ENCODE measurements at regions of chr15 and their contacts with region 1.

Region 1: GRCh38 chr15:74373731-74374647 is 6.5 kb upstream of the CYP11A1 start:
- DNase-seq: peak; percentile 94 to 98 (median 97)
- ATAC-seq: peak; percentile 98 to 99
- H3K4me3 ChIP-seq: peak overlapping the region; percentile 40
- H3K27ac ChIP-seq: no peak overlapping the region
- H3K4me1 ChIP-seq: no peaks in the 10 kb centered on the region
- H3K27me3 ChIP-seq: no peaks in the 10 kb centered on the region

Region 2: DNA sequence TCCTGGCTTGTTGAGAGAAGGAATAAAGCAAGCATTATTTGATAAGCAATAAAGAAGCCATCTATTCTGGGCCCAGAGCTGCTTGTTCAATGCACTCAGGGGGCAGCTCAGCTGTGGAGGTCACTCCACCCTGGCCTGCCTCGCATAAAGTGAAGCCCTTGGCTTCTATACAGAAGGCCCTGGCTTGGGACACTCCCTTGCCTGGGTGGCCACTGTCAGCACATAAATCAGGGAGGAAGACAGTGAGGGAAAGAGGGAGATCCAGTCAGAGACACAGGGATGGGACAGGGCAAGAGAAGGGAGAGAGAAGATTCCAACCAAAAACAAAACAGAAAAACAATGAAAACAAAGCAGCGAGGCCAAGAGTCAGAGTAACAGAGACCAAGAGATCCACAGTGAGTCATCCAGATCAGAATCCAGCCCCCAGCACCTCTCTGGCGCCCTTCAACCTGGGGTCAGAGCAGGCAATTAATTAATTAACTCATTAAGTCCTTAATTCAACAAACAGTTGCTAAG is 632.6 kb before region 1 on chr15:
- intact Hi-C with region 1: no loop called
- DNase-seq: peak in 1 of 3 donors; percentile 55
- ATAC-seq: no peak
- H3K4me3 ChIP-seq: no peak overlapping the region
- H3K27ac ChIP-seq: no peak overlapping the region
- H3K4me1 ChIP-seq: peaks cover 5% of the 10 kb centered on the region
- H3K27me3 ChIP-seq: no peaks in the 10 kb centered on the region

Region 3: GRCh38 chr15:74489518-74490338 is 115.7 kb after region 1 on chr15:
- intact Hi-C with region 1: loop called in 2 of 4 experiments (anchors 5 kb)
- DNase-seq: peak; percentile 20 to 72 (median 64)
- ATAC-seq: peak; percentile 47 to 66
- H3K4me3 ChIP-seq: no peak overlapping the region
- H3K27ac ChIP-seq: no peak overlapping the region
- H3K4me1 ChIP-seq: no peaks in the 10 kb centered on the region
- H3K27me3 ChIP-seq: no peaks in the 10 kb centered on the region

Region 4: DNA sequence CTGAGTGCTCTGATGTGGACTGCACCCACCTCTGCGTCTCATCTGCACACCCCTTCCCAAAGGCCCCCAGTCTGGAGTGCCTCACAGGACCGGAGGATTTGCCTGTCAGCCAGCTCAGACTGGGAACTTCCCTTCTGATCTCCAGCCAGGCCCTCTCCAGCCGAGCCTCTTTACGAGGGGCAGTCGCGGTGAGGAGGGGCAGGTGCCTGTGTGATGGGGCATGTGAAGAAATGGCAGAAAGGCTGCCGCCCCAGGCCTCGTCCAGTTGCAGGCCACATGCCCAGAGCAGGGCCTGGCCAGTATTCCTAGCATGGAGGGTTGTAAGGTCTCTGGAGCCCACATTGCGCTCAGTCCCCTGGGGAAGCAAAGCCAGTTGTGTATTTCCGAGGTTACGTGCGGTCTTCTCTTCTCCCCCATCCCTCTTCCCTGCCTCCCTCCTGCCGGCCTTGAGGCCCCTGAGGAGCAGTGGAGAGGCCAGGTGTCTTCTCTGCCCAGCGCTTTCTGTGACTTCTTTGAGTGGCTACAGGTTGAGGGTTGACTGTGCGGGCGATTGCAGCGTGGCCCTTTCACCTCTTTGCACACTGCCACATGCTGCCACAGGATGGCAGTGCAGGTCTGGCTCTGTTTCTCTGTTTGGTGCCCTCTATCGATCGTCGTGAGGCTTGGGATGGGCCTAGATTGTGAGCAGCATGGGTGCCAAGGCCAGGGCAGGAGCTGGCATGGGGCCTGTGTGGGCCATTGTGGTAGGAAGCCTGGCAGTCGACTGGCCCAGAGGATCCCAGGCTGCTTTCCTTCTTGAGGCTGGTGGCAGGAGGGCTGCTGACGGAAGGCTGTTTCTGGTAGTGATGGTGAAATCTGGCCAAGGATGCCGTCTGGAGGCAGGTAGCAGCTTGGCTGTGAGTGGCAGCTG is 246.9 kb after region 1 on chr15:
- intact Hi-C with region 1: loop called in 2 of 4 experiments (anchors 10 kb)
- DNase-seq: peak in 2 of 3 donors; percentile 59 to 82
- ATAC-seq: peak; percentile 28 to 31
- H3K4me3 ChIP-seq: no peak overlapping the region
- H3K27ac ChIP-seq: no peak overlapping the region
- H3K4me1 ChIP-seq: peaks cover 4% of the 10 kb centered on the region
- H3K27me3 ChIP-seq: no peaks in the 10 kb centered on the region

Region 5: GRCh38 chr15:74635228-74635627 is 261.2 kb after region 1 on chr15:
- intact Hi-C with region 1: loop called in 2 of 4 experiments (anchors 5 to 10 kb)
- DNase-seq: peak; percentile 55 to 79 (median 75)
- ATAC-seq: peak; percentile 58 to 72
- H3K4me3 ChIP-seq: no peak overlapping the region
- H3K27ac ChIP-seq: no peak overlapping the region
- H3K4me1 ChIP-seq: no peaks in the 10 kb centered on the region
- H3K27me3 ChIP-seq: no peaks in the 10 kb centered on the region

Region 6: DNA sequence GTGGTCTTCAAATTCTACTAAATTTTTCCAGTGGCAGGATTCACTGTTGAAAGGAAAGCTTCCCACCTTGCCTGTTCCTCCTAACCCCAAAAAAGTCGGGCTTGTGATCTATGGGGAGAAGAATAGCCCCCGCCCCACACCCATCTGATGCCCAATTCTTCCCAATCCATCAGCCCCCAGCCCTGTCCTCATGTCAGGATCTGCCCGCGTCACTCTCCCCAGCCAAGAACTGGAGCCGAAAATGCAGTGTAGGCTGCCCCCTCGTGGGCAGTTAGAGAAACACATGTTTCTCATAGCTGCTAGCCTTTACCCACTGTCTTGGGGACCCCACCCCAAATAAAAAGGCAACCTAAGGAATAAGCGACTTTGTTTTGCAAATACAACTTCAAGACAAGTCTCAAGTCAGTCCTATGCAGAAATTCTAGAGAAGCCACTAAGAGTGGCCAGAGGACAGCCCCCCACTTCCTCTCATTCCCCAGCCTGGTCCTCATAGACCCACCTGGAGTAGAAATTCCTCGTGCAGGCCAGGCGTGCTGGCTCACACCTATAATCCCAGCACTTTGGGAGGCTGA is 394.9 kb after region 1 on chr15:
- intact Hi-C with region 1: loop called (anchors 5 to 10 kb)
- DNase-seq: peak; percentile 67 to 85 (median 78)
- ATAC-seq: peak; percentile 33 to 60
- H3K4me3 ChIP-seq: no peak overlapping the region
- H3K27ac ChIP-seq: no peak overlapping the region
- H3K4me1 ChIP-seq: no peaks in the 10 kb centered on the region
- H3K27me3 ChIP-seq: no peaks in the 10 kb centered on the region

Region 7: GRCh38 chr15:74781431-74782258 is 407.7 kb after region 1 on chr15 and contains the start of gene CSK:
- intact Hi-C with region 1: loop called in 1 of 4 experiments (anchors 10 kb)
- DNase-seq: peak; percentile 83 to 94 (median 92)
- ATAC-seq: peak; percentile 53 to 56
- H3K4me3 ChIP-seq: peak within 1 kb of the TSS; percentile 96
- H3K27ac ChIP-seq: peak within 1 kb of the TSS; percentile 94
- H3K4me1 ChIP-seq: peaks cover 22% of the 10 kb centered on the region
- H3K27me3 ChIP-seq: no peaks in the 10 kb centered on the region
- total RNA-seq, gene CSK: 52.9 to 68.3 (median 60.9) TPM